ENCODE measurements at regions of chr14 and their contacts with region 1.

Region 1: GRCh38 chr14:67440541-67440940 is 28.6 kb upstream of the PLEK2 start:
- DNase-seq: no peak
- H3K27ac ChIP-seq: no peak overlapping the region
- CTCF ChIP-seq: no peak

Region 2: DNA sequence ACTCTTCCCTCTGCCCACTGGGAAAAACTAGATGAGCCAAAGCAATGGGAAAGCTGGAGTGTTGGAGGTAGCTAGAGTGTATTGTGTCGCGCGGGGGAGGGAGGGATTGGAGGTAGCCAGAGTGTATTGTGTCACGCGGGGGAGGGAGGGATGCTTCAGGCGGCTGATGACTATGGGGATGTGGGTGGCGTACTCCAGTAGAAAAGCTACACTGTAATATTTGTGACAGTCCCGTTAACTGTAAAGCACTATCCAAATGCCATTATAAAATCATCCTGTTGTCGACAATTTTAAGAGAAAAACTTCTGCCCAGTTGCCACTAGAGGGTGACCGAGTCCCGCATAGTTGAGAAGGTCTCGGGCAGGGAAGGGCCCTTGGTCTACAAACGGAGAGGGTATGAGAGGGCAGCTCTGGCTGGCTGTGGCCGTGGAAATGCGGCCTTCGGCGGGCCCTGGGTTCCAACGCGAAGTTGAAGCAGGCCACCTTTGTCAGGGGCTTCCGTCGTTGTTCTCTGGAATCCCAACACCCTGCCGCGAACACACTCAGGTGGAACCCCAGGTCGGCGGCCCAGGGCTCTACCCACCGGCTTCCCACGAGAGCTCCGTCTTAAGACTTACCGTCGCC is 13.4 kb before region 1 on chr14:
- CTCF ChIA-PET with region 1: interaction called, 17 read pairs
- POLR2A ChIA-PET with region 1: no interaction called
- DNase-seq: peak; percentile 83
- H3K27ac ChIP-seq: 0 out of 2 replicates have a peak overlapping the region, but pooled peaks have one; percentile 16
- CTCF ChIP-seq: peak; percentile 79

Region 3: DNA sequence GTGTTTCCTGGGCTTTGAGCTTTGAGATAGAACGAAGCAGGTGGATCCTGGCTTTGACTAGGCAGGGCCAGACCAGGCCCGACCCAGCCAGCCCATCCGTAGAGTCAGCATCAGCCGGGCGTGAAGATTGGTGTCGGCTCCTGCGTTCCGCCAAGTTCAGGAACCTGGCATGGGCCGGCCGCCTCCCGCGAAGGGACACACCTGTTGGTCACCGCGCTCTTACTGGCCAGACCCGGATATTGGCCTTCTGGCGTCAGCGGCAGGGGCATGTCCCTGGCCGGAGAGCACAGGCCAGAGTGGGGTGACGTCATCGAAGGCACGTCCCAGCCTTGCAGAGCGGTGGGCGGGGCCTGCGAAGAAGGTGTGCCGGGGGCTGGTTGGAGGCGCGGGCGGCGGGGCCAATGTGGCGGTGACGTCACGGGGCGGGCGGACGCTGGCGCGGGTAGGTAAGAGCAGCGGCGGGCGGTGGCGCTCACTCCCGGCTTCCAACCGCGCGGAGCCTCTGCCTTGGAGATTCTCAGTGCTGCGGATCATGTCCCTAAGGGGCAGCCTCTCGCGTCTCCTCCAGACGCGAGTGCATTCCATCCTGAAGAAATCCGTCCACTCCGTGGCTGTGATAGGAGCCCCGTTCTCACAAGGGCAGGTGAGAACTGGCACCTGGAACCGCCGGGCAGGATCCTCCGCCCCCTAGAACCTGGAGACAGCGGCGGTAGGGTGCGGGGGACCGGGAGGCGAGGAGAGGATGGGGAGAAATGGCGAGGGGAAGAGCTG is 179.1 kb after region 1 on chr14 and contains the start of gene ARG2:
- CTCF ChIA-PET with region 1: no interaction called
- POLR2A ChIA-PET with region 1: no interaction called
- DNase-seq: peak; percentile 95
- H3K27ac ChIP-seq: peak within 1 kb of the TSS; percentile 61
- CTCF ChIP-seq: 0 out of 2 replicates have a peak, but pooled peaks have one; percentile 19

Region 4: GRCh38 chr14:68577827-68578541 is 1137.4 kb after region 1 on chr14:
- CTCF ChIA-PET with region 1: no interaction called
- POLR2A ChIA-PET with region 1: no interaction called
- DNase-seq: peak; percentile 94
- H3K27ac ChIP-seq: peak overlapping the region; percentile 89
- CTCF ChIP-seq: no peak